G401 (cell line): ENCODE measurements at regions of chr9 and their contacts with region 1.

Region 1: DNA sequence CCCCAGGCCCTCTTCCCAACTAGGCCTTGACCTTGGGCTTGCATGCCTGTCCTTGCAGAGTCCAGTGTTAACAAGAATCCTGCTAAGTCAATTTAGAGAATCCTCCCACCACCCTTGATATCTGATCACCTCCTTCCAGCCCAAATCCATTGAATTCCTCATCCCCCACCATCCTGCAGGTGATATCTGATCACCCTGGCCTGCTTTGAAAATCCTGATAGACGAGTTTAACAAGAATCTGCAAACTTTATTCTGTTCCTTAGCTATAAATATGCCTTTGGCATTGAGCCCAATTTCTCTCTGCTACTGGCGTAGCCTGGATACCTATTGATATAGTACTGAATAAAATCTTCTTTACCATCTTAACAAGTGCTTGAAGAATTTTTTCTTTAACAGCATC is 125.5 kb downstream of the DIRAS2 start:
- DNase-seq: no peak

Region 2: GRCh38 chr9:90441814-90442213 is 75.3 kb before region 1 on chr9:
- in situ Hi-C with region 1: no loop called
- DNase-seq: peak; percentile 31

Region 3: GRCh38 chr9:90546229-90546641 is 29.1 kb after region 1 on chr9:
- in situ Hi-C with region 1: no loop called
- DNase-seq: peak; percentile 99

Region 4: GRCh38 chr9:90569511-90569910 is 52.4 kb after region 1 on chr9:
- in situ Hi-C with region 1: loop called (anchors 5 kb)
- DNase-seq: no peak